AG04450 (cell line): ENCODE measurements at regions of chr13 and their contacts with region 1.

Region 1: GRCh38 chr13:36282818-36283445 is 14.7 kb downstream of the CCDC169 start:
- DNase-seq: peak; percentile 4
- H3K4me3 ChIP-seq: no peak overlapping the region
- H3K27ac ChIP-seq: no peak overlapping the region
- H3K27me3 ChIP-seq: no peaks in the 10 kb centered on the region
- CTCF ChIP-seq: peak; percentile 88

Region 2: GRCh38 chr13:35978603-35979316 is 304.2 kb before region 1 on chr13:
- CTCF ChIA-PET with region 1: interaction called, 378 read pairs
- POLR2A ChIA-PET with region 1: no interaction called
- DNase-seq: no peak
- H3K4me3 ChIP-seq: no peak overlapping the region
- H3K27ac ChIP-seq: peak overlapping the region; percentile 43
- H3K27me3 ChIP-seq: no peaks in the 10 kb centered on the region
- CTCF ChIP-seq: peak; percentile 69

Region 3: DNA sequence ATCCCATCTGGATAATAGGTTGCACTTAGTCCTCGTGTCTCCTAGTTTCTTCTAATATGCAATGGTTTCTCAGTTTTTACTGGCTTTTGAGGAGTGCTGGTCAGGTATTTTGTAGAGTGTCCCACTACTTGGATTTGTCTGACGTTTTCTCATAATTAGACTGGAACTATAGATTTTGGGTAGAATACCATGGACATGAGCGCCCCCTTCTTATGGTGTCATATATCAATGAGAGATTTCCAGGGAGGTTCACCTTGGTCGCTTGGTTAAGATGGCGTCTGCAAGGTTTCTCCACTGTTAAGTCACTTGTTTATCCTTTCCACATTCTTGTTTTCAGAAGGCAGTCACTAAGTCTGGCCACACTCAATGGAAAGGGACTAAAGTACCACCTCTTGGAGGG is 75.3 kb before region 1 on chr13:
- CTCF ChIA-PET with region 1: no interaction called
- POLR2A ChIA-PET with region 1: no interaction called
- DNase-seq: no peak
- H3K4me3 ChIP-seq: no peak overlapping the region
- H3K27ac ChIP-seq: no peak overlapping the region
- H3K27me3 ChIP-seq: no peaks in the 10 kb centered on the region
- CTCF ChIP-seq: no peak

Region 4: DNA sequence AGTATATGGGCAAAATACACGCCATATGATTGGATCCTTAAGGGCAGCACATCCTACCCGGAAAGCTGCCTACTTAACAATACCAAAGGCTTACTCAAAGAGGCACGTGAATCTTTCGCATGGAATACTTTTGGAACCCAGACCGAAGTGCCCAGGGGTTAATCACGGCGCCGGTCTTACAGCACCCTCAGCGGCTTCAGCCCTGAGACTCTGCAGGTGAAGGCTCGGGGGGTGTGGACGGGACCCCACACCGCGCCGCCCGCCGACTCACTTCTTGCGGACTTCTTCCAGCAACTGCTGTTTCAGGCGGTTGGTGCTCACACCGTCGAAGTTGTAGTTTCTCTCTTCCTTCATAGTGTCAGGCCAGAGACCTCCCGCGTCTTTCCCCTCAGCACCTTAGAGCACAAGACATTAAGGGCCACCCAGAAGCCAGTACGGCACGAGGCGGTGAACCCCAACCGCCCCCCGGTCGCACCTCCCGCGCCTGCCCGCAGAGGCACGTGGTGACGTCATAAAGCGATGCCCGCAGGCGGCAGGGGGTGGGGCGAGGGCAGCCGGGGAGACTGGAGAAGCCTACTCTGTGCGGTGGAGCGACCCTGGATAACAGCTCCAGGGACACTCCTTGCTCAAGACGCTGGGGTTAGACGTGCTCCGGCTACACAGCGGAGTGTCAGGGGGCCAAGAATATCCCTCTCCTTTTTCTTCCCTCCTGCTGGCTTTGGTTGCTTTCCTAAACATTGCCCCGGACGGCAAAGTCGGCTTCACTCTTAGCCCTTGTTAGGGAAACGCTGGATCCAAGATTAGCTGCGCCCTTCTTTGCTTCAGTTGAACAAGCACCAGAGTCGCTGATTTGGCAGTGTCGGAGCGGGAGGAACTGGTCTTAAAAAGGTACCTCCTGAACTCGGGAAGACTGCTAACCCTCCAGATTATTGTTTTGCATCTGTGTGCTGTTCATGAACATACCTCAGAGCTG is 14.7 kb after region 1 on chr13 and contains the start of gene CCDC169:
- CTCF ChIA-PET with region 1: interaction called, 41 read pairs
- POLR2A ChIA-PET with region 1: no interaction called
- DNase-seq: peak; percentile 10
- H3K4me3 ChIP-seq: peak within 1 kb of the TSS; percentile 74
- H3K27ac ChIP-seq: peak within 1 kb of the TSS; percentile 59
- H3K27me3 ChIP-seq: no peaks in the 10 kb centered on the region
- CTCF ChIP-seq: no peak
- polyA plus RNA-seq, gene CCDC169: 1.3 and 2.2 TPM in 2 replicates

Region 5: GRCh38 chr13:36324011-36324483 is 41.1 kb after region 1 on chr13:
- CTCF ChIA-PET with region 1: interaction called, 10 read pairs
- POLR2A ChIA-PET with region 1: no interaction called
- DNase-seq: no peak
- H3K4me3 ChIP-seq: no peak overlapping the region
- H3K27ac ChIP-seq: no peak overlapping the region
- H3K27me3 ChIP-seq: no peaks in the 10 kb centered on the region
- CTCF ChIP-seq: no peak

Region 6: GRCh38 chr13:36369268-36370107 is 86.6 kb after region 1 on chr13:
- CTCF ChIA-PET with region 1: interaction called, 12 read pairs
- POLR2A ChIA-PET with region 1: no interaction called
- DNase-seq: no peak
- H3K4me3 ChIP-seq: no peak overlapping the region
- H3K27ac ChIP-seq: no peak overlapping the region
- H3K27me3 ChIP-seq: no peaks in the 10 kb centered on the region
- CTCF ChIP-seq: no peak

Region 7: DNA sequence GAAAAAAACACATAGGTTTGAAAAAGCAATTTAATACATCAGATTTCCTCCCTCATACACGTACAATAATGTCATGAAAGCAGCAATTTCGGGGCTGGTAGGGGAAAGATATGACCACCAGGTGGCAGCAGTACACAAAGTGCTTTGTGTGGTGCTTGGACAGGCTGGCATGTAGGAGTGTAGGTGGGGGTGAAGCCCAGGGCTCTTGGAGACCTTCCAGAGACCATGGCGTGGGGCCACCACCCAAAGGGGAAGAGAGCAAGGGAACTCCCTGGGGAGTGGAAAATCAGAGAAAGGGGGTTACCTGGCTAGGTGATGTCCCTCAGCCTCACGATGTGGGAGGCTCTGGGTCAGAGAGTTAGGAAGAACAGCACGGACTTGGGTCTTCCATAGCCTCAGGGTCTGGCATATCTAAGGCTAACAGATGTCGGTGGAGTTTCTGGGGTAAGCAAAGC is 137.5 kb after region 1 on chr13:
- CTCF ChIA-PET with region 1: interaction called, 22 read pairs
- POLR2A ChIA-PET with region 1: no interaction called
- DNase-seq: peak; percentile 23
- H3K4me3 ChIP-seq: no peak overlapping the region
- H3K27ac ChIP-seq: no peak overlapping the region
- H3K27me3 ChIP-seq: no peaks in the 10 kb centered on the region
- CTCF ChIP-seq: peak; percentile 91

Region 8: GRCh38 chr13:36981156-36981743 is 698.3 kb after region 1 on chr13:
- CTCF ChIA-PET with region 1: interaction called, 22 read pairs
- POLR2A ChIA-PET with region 1: no interaction called
- DNase-seq: peak; percentile 36
- H3K4me3 ChIP-seq: no peak overlapping the region
- H3K27ac ChIP-seq: no peak overlapping the region
- H3K27me3 ChIP-seq: no peaks in the 10 kb centered on the region
- CTCF ChIP-seq: peak; percentile 55